ENCODE measurements at regions of chr11 and their contacts with region 1.

Region 1: GRCh38 chr11:45102810-45103621 is 43.4 kb upstream of the PRDM11 start:
- DNase-seq: peak in 1 of 2 donors; percentile 75
- H3K4me3 ChIP-seq: no peak overlapping the region
- H3K27ac ChIP-seq: no peak overlapping the region
- H3K4me1 ChIP-seq: peaks cover 3% of the 10 kb centered on the region in 2 donors
- H3K27me3 ChIP-seq: peaks cover 5% of the 10 kb centered on the region
- CTCF ChIP-seq: peak; percentile 96 to 99 (median 96)

Region 2: DNA sequence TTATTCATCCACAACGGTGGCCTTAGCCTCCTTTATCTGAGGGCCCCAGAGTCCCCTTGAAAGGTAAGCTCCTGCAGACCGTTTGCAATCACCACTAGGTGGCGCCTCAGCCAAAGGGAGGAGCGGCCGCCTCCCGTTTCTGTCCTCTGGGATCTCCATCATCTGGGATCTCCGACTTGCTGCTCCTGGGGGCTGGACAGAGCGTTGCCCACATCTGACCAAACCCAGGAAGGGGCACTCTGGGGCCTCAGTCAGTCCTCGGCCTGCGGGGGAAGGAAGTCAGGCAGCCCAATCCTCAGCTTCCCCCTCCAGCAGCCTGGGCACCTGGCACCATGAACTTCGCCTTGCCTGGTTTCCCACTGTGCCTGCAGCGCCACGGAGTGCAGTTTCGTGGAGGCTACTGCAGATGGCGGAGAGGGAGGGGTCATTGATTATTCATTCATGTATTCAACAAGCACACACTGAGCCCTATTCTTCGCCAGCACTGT is 175.8 kb before region 1 on chr11:
- intact Hi-C with region 1: loop called (anchors 1 kb)
- DNase-seq: peak in 1 of 2 donors; percentile 73
- H3K4me3 ChIP-seq: no peak overlapping the region
- H3K27ac ChIP-seq: no peak overlapping the region
- H3K4me1 ChIP-seq: no peaks in the 10 kb centered on the region
- H3K27me3 ChIP-seq: no peaks in the 10 kb centered on the region
- CTCF ChIP-seq: peak; percentile 72 to 89 (median 84)

Region 3: DNA sequence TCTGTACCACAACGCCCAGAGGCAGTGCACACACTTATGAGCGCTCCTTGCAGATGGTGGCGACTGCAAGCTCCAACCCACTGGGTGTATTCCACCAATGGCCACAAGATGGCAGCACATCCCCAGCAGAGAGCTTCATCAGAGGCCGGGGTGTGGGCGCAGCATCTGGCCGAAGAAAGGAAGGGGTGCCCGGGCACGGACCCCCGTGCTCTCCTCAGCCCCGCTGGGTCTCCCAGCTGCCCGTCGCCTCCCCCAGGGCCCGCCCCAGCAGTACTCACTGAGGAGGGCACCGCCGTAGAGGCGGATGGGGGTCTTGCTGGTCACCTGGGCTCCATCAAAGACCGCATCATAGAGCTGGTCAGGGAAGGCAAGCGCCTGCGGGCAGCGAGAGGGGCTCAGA is 166.5 kb before region 1 on chr11:
- intact Hi-C with region 1: loop called (anchors 1 kb)
- DNase-seq: peak; percentile 26 to 86
- H3K4me3 ChIP-seq: no peak overlapping the region
- H3K27ac ChIP-seq: no peak overlapping the region
- H3K4me1 ChIP-seq: no peaks in the 10 kb centered on the region
- H3K27me3 ChIP-seq: no peaks in the 10 kb centered on the region
- CTCF ChIP-seq: peak; percentile 93 to 95 (median 95)

Region 4: GRCh38 chr11:45133871-45134270 is 30.9 kb after region 1 on chr11:
- intact Hi-C with region 1: no loop called
- DNase-seq: no peak
- H3K4me3 ChIP-seq: no peak overlapping the region
- H3K27ac ChIP-seq: no peak overlapping the region
- H3K4me1 ChIP-seq: no peaks in the 10 kb centered on the region
- H3K27me3 ChIP-seq: no peaks in the 10 kb centered on the region
- CTCF ChIP-seq: no peak

Measured in ascending aorta (tissue), 2 donors.